ENCODE measurements at regions of chrX and their contacts with region 1.

Region 1: GRCh38 chrX:79167462-79167861 is 23.0 kb downstream of the GPR174 start:
- DNase-seq: peak in 4 of 9 donors; percentile 27 to 45 (median 32)
- ATAC-seq: peak; percentile 54
- H3K4me3 ChIP-seq: peak overlapping the region; percentile 42
- H3K4me3 Mint-ChIP-seq: peak overlapping the region; percentile 56 to 87 (median 74)
- H3K27ac ChIP-seq: peak overlapping the region; percentile 76
- H3K27ac Mint-ChIP-seq: peak overlapping the region; percentile 79 to 99 (median 95)
- H3K4me1 ChIP-seq: peaks cover 65 to 73% of the 10 kb centered on the region in 2 donors
- H3K4me1 Mint-ChIP-seq: peaks cover 20 to 93% (median 87%) of the 10 kb centered on the region in 7 donors
- H3K27me3 ChIP-seq: no peaks in the 10 kb centered on the region
- H3K27me3 Mint-ChIP-seq: no peaks in the 10 kb centered on the region

Region 2: DNA sequence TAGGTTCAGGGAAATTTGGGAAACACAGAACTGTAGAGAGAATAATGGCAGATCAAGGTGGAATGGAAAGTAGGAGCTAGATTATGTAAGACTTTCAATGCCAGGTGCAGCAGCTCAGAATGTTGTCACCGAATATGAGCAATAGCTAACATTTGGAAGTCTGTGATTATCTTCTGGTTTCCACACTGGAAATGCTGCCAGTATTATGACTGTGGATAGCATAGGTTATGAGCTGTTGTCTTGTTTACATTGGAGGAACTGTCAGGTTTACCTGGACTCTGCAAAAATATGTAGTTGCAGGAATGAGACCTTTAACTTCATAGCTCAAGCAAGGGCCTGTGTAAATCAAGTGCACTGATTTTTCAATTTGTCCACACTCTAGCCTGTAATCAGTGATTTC is 1002.0 kb before region 1 on chrX:
- CTCF ChIA-PET with region 1: no interaction called
- POLR2A ChIA-PET with region 1: no interaction called
- intact Hi-C with region 1: no loop called
- DNase-seq: no peak
- ATAC-seq: no peak
- H3K4me3 ChIP-seq: no peak overlapping the region
- H3K4me3 Mint-ChIP-seq: no peak overlapping the region
- H3K27ac ChIP-seq: no peak overlapping the region
- H3K27ac Mint-ChIP-seq: no peak overlapping the region
- H3K4me1 ChIP-seq: no peaks in the 10 kb centered on the region
- H3K4me1 Mint-ChIP-seq: peaks cover 0 to 20% (median 7%) of the 10 kb centered on the region in 7 donors
- H3K27me3 ChIP-seq: no peaks in the 10 kb centered on the region
- H3K27me3 Mint-ChIP-seq: no peaks in the 10 kb centered on the region

Region 3: DNA sequence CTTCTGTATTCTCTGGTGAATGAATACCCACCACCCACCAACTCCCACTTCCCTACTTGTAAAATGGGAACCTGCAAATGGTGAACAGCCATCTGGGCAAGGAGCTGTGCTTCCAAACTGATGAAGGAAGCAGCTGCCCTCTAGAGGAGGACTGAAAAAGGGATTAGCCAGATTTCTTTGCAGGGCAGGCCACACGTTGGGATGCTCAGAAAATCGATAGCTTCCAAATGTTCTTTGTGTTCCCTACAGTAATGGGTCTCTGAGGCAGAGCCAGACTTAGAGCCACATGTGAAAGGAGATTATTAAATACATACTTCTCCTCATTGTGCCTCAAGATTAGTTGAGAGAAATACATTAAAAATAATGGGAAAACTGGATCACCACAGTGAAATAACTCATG is 459.2 kb before region 1 on chrX:
- CTCF ChIA-PET with region 1: no interaction called
- POLR2A ChIA-PET with region 1: no interaction called
- intact Hi-C with region 1: no loop called
- DNase-seq: no peak
- ATAC-seq: no peak
- H3K4me3 ChIP-seq: no peak overlapping the region
- H3K4me3 Mint-ChIP-seq: no peak overlapping the region
- H3K27ac ChIP-seq: no peak overlapping the region
- H3K27ac Mint-ChIP-seq: no peak overlapping the region
- H3K4me1 ChIP-seq: no peaks in the 10 kb centered on the region
- H3K4me1 Mint-ChIP-seq: peaks cover 0 to 1% (median 0%) of the 10 kb centered on the region in 7 donors
- H3K27me3 ChIP-seq: no peaks in the 10 kb centered on the region
- H3K27me3 Mint-ChIP-seq: no peaks in the 10 kb centered on the region

Region 4: GRCh38 chrX:79153348-79153747 is 14.1 kb before region 1 on chrX:
- CTCF ChIA-PET with region 1: interaction called, 4 read pairs
- POLR2A ChIA-PET with region 1: interaction called, 93 read pairs
- intact Hi-C with region 1: no loop called
- DNase-seq: no peak
- ATAC-seq: no peak
- H3K4me3 ChIP-seq: peak overlapping the region; percentile 57
- H3K4me3 Mint-ChIP-seq: peak overlapping the region; percentile 51 to 94 (median 84)
- H3K27ac ChIP-seq: peak overlapping the region; percentile 85
- H3K27ac Mint-ChIP-seq: peak overlapping the region; percentile 69 to 98 (median 95)
- H3K4me1 ChIP-seq: peaks cover 11 to 32% of the 10 kb centered on the region in 2 donors
- H3K4me1 Mint-ChIP-seq: peaks cover 25 to 76% (median 51%) of the 10 kb centered on the region in 7 donors
- H3K27me3 ChIP-seq: no peaks in the 10 kb centered on the region
- H3K27me3 Mint-ChIP-seq: no peaks in the 10 kb centered on the region

Region 5: DNA sequence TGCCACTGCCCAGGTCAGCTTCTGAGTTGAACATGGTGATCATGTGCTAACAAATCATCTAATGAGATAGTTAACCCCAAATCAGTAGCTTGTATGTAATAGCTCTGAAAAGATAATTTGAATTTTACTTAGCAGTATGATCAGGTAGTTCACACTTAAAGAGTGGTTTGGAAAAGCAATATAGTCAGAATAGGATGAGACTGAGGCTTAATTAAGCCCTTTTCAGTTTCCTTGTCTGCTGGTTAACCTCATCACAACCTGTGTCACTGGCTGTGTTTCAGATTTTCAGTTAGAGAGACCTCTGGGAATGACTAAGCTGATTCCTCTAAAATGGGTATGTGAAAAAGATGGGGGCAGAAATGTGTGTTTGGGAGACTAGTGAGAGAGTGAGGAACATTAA is 15.2 kb after region 1 on chrX:
- CTCF ChIA-PET with region 1: interaction called, 4 read pairs
- POLR2A ChIA-PET with region 1: interaction called, 8 read pairs
- intact Hi-C with region 1: loop called (anchors 1 to 2 kb)
- DNase-seq: no peak
- ATAC-seq: no peak
- H3K4me3 ChIP-seq: no peak overlapping the region
- H3K4me3 Mint-ChIP-seq: peak overlapping the region in 6 of 10 donors; percentile 10 to 57 (median 34)
- H3K27ac ChIP-seq: peak overlapping the region; percentile 10
- H3K27ac Mint-ChIP-seq: peak overlapping the region; percentile 9 to 91 (median 79)
- H3K4me1 ChIP-seq: peaks cover 34 to 36% of the 10 kb centered on the region in 2 donors
- H3K4me1 Mint-ChIP-seq: peaks cover 12 to 71% (median 61%) of the 10 kb centered on the region in 7 donors
- H3K27me3 ChIP-seq: no peaks in the 10 kb centered on the region
- H3K27me3 Mint-ChIP-seq: no peaks in the 10 kb centered on the region

Region 6: GRCh38 chrX:79290596-79290995 is 123.1 kb after region 1 on chrX:
- CTCF ChIA-PET with region 1: no interaction called
- POLR2A ChIA-PET with region 1: no interaction called
- intact Hi-C with region 1: no loop called
- DNase-seq: no peak
- ATAC-seq: no peak
- H3K4me3 ChIP-seq: no peak overlapping the region
- H3K4me3 Mint-ChIP-seq: peak overlapping the region in 7 of 10 donors; percentile 2 to 62 (median 42)
- H3K27ac ChIP-seq: no peak overlapping the region
- H3K27ac Mint-ChIP-seq: peak overlapping the region in 8 of 9 donors; percentile 1 to 84 (median 36)
- H3K4me1 ChIP-seq: no peaks in the 10 kb centered on the region
- H3K4me1 Mint-ChIP-seq: peaks cover 12 to 53% (median 46%) of the 10 kb centered on the region in 7 donors
- H3K27me3 ChIP-seq: no peaks in the 10 kb centered on the region
- H3K27me3 Mint-ChIP-seq: no peaks in the 10 kb centered on the region

Region 7: DNA sequence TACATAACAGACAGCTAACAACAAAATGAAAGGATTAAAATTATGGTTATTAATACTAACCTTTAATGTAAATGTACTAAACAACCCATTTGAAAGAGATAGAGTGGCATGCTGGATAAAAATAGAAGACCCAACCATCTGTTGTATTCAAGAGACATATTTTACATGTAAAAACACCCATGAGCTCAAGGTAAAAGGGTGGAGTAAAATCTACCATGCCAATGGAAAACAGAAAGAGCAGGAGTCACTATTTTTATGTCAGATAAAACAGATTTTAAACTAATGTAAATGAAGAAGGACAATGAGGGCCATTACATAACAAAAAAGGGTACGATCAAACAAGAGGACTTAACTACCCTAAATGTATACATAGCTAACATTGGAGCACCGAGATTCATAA is 133.4 kb after region 1 on chrX:
- CTCF ChIA-PET with region 1: no interaction called
- POLR2A ChIA-PET with region 1: no interaction called
- intact Hi-C with region 1: no loop called
- DNase-seq: no peak
- ATAC-seq: no peak
- H3K4me3 ChIP-seq: no peak overlapping the region
- H3K4me3 Mint-ChIP-seq: no peak overlapping the region
- H3K27ac ChIP-seq: no peak overlapping the region
- H3K27ac Mint-ChIP-seq: no peak overlapping the region
- H3K4me1 ChIP-seq: no peaks in the 10 kb centered on the region
- H3K4me1 Mint-ChIP-seq: no peaks in the 10 kb centered on the region
- H3K27me3 ChIP-seq: no peaks in the 10 kb centered on the region
- H3K27me3 Mint-ChIP-seq: no peaks in the 10 kb centered on the region